ENCODE measurements at regions of chr2 and their contacts with region 1.

Region 1: GRCh38 chr2:144516981-144517865 is 2.7 kb downstream of the ZEB2 start:
- DNase-seq: peak; percentile 83
- H3K4me3 ChIP-seq: peak overlapping the region; percentile 66
- H3K27ac ChIP-seq: peak overlapping the region; percentile 98
- H3K4me1 ChIP-seq: peaks cover 24% of the 10 kb centered on the region
- H3K27me3 ChIP-seq: no peaks in the 10 kb centered on the region
- CTCF ChIP-seq: no peak

Region 2: GRCh38 chr2:144320491-144320890 is 196.7 kb before region 1 on chr2:
- CTCF ChIA-PET with region 1: no interaction called
- POLR2A ChIA-PET with region 1: no interaction called
- intact Hi-C with region 1: loop called (anchors 5 kb)
- DNase-seq: peak; percentile 60
- H3K4me3 ChIP-seq: no peak overlapping the region
- H3K27ac ChIP-seq: peak overlapping the region; percentile 40
- H3K4me1 ChIP-seq: peaks cover 58% of the 10 kb centered on the region
- H3K27me3 ChIP-seq: no peaks in the 10 kb centered on the region
- CTCF ChIP-seq: no peak

Region 3: DNA sequence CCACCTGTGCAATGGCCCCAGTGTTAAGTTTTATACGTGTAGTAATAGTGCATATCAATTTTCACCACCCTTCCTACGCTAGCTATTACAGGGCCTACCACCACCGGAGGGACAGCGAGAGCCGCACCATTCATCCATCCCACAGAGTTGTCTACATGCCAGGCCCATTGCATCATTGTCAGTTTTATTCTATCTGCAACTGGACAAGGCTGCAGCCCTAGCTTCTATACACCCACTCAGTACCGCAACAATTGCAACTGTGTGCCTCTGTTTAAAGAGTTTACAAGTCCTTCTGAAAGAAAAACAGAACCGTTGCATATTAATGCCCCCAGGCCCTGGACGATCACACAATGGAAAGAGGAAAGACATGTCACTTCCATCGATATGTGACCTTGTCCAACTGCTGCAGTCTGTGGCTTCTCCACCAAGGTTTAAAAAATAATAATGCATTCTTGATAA is 55.9 kb before region 1 on chr2:
- CTCF ChIA-PET with region 1: no interaction called
- POLR2A ChIA-PET with region 1: no interaction called
- intact Hi-C with region 1: loop called (anchors 2 kb)
- DNase-seq: peak; percentile 86
- H3K4me3 ChIP-seq: peak overlapping the region; percentile 19
- H3K27ac ChIP-seq: peak overlapping the region; percentile 71
- H3K4me1 ChIP-seq: peaks cover 72% of the 10 kb centered on the region
- H3K27me3 ChIP-seq: no peaks in the 10 kb centered on the region
- CTCF ChIP-seq: no peak

Region 4: GRCh38 chr2:144942516-144943256 is 425.5 kb after region 1 on chr2:
- CTCF ChIA-PET with region 1: no interaction called
- POLR2A ChIA-PET with region 1: no interaction called
- intact Hi-C with region 1: loop called (anchors 10 kb)
- DNase-seq: peak; percentile 55
- H3K4me3 ChIP-seq: no peak overlapping the region
- H3K27ac ChIP-seq: peak overlapping the region; percentile 72
- H3K4me1 ChIP-seq: peaks cover 70% of the 10 kb centered on the region
- H3K27me3 ChIP-seq: no peaks in the 10 kb centered on the region
- CTCF ChIP-seq: no peak

Region 5: DNA sequence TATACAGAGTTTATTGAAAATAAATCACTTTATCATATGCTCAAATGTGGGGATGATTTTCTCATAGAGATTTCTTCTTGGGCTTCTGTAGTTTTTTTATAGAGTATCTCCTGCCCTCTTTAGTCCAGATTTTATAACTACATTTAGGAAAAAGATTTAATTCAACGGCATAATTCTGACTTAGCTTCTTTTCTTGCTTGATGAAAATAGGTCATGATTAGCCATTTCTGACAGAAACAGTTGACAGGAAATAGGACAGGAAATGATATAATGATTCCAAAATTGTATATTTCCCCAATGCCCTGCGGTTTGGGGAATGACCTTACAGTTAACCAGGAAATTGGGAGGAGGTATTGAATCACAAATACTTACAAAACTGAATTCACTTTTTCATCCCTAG is 1795.7 kb after region 1 on chr2:
- CTCF ChIA-PET with region 1: no interaction called
- POLR2A ChIA-PET with region 1: no interaction called
- intact Hi-C with region 1: loop called (anchors 10 kb)
- DNase-seq: peak; percentile 97
- H3K4me3 ChIP-seq: no peak overlapping the region
- H3K27ac ChIP-seq: peak overlapping the region; percentile 66
- H3K4me1 ChIP-seq: peaks cover 52% of the 10 kb centered on the region
- H3K27me3 ChIP-seq: no peaks in the 10 kb centered on the region
- CTCF ChIP-seq: peak; percentile 59